ENCODE measurements at regions of chr17 and their contacts with region 1.

Region 1: GRCh38 chr17:76737082-76737675 is at the start of gene SRSF2:
- DNase-seq: peak; percentile 95 to 98
- H3K4me3 ChIP-seq: peak within 1 kb of the TSS; percentile 88 to 100 (median 98)
- H3K27ac ChIP-seq: peak within 1 kb of the TSS; percentile 100
- H3K4me1 ChIP-seq: peaks cover 3 to 12% (median 7%) of the 10 kb centered on the region in 4 experiments; a peak in 6 of 7 replicates
- H3K27me3 ChIP-seq: no peaks in the 10 kb centered on the region
- CTCF ChIP-seq: no peak
- EP300 ChIP-seq: peak in 1 of 2 experiments; percentile 85; a peak in 2 of 3 replicates
- POLR2A ChIP-seq: peak; percentile 100
- RAD21 ChIP-seq: no peak
- total RNA-seq, gene SRSF2: 397 and 413 TPM in 2 replicates

Region 2: DNA sequence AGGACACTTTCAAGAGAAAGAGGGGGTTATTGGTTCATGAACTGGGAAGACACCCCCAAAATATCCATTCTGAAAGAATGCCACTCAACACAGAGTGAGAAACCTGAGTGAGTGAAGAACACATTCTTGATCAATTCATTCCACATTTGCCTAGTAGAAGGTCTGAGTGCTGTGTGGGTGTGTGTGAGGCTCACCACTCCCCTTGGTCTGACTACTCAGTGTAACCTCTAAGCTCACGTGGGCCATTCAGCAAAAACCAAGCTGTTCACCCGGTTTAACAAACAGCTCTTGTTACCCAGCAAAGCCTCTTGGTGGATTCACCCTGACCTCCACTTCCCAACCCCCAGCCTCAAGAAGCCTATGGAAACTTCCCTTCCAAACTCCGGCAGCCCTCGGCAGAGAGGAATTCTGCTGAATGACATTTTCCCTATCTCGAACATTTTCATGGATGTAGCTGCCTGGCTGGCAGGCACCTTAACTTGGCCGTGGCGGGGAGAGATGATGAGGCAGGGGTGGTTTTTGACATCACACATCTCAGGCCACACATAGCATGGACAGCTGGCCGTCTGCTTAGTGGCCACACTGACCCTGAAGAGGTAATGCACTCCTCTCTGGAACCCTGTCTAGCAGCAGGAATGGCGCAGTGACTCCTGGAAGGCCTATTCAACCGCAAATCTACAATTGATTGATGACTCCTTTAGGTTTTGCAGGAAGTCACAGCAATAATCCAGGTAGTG is 105.2 kb before region 1 on chr17:
- CTCF ChIA-PET with region 1: no interaction called
- POLR2A ChIA-PET with region 1: no interaction called
- DNase-seq: no peak
- H3K4me3 ChIP-seq: no peak overlapping the region
- H3K27ac ChIP-seq: no peak overlapping the region
- H3K4me1 ChIP-seq: peaks cover 0 to 6% (median 1%) of the 10 kb centered on the region in 4 experiments; a peak in 4 of 7 replicates
- H3K27me3 ChIP-seq: no peaks in the 10 kb centered on the region
- CTCF ChIP-seq: no peak
- EP300 ChIP-seq: no peak
- POLR2A ChIP-seq: no peak
- RAD21 ChIP-seq: no peak

Region 3: DNA sequence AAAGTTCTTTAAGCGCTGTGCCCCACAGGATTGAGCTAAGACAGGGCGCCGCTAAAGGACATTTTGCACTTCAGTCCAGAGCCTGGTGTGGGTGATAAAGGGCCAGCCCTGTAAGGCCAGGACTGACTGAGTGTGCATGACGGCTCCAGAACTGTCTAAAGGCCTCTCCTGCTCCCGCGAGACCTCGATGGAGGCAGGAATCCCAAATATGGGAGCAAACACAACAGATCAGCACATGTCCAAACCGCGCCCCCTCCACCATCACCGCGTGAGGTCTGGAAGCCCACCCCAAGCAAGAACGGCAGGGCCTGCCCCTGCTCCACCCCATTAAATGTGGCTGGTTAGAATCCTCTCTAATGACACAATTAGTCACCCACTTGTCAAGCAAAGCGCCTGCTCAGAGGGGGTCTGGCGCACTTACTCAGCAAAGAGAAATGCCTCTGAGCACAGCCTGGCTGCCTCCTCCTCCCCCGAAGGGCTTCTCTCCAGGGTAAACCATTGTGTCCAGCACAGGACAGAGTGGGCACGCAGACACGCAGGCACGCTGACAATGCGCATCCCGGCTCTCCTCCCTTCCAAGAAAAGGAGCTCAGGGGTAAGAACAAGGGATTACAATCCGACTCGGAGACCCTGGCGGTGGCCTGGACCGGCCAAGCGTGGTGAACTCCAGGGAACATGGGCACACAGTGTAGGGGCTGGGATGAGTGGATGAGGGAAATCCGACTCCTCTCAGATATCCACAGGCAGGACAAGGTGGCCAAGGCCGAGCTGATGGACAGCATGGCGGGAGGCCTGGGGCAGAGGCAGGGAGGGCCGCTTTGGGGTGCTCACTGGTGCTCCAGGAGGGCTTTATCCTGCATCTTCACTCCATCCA is 27.9 kb before region 1 on chr17:
- CTCF ChIA-PET with region 1: interaction called, 6 read pairs
- POLR2A ChIA-PET with region 1: interaction called, 19 read pairs
- DNase-seq: peak in 1 of 2 experiments; percentile 56
- H3K4me3 ChIP-seq: peak overlapping the region; percentile 28 to 67 (median 54); a peak in 7 of 8 replicates
- H3K27ac ChIP-seq: no peak overlapping the region
- H3K4me1 ChIP-seq: peaks cover 11 to 28% (median 19%) of the 10 kb centered on the region in 4 experiments
- H3K27me3 ChIP-seq: peaks cover 2 to 22% (median 20%) of the 10 kb centered on the region in 4 experiments
- CTCF ChIP-seq: no peak
- EP300 ChIP-seq: no peak
- POLR2A ChIP-seq: no peak
- RAD21 ChIP-seq: no peak

Region 4: GRCh38 chr17:76714822-76715495 is 22.2 kb before region 1 on chr17:
- CTCF ChIA-PET with region 1: interaction called, 6 read pairs
- POLR2A ChIA-PET with region 1: interaction called, 19 read pairs
- DNase-seq: peak in 1 of 2 experiments; percentile 92
- H3K4me3 ChIP-seq: no peak overlapping the region
- H3K27ac ChIP-seq: no peak overlapping the region
- H3K4me1 ChIP-seq: peaks cover 2 to 7% (median 5%) of the 10 kb centered on the region in 4 experiments; a peak in 5 of 7 replicates
- H3K27me3 ChIP-seq: peaks cover 0 to 3% (median 2%) of the 10 kb centered on the region in 4 experiments; a peak in 5 of 7 replicates
- CTCF ChIP-seq: peak; percentile 53 to 80 (median 70)
- EP300 ChIP-seq: no peak
- POLR2A ChIP-seq: no peak
- RAD21 ChIP-seq: peak; percentile 55 to 69

Region 5: GRCh38 chr17:76726231-76726775 is 10.9 kb before region 1 on chr17 and contains the start of gene JMJD6:
- CTCF ChIA-PET with region 1: interaction called, 3 read pairs
- POLR2A ChIA-PET with region 1: interaction called, 181 read pairs
- DNase-seq: peak; percentile 87 to 90
- H3K4me3 ChIP-seq: peak within 1 kb of the TSS; percentile 83 to 99 (median 84)
- H3K27ac ChIP-seq: peak within 1 kb of the TSS; percentile 97
- H3K4me1 ChIP-seq: peaks cover 0 to 9% (median 2%) of the 10 kb centered on the region in 4 experiments; a peak in 5 of 7 replicates
- H3K27me3 ChIP-seq: no peaks in the 10 kb centered on the region; a peak in 2 of 7 replicates
- CTCF ChIP-seq: no peak
- EP300 ChIP-seq: no peak
- POLR2A ChIP-seq: peak in 1 of 2 experiments; percentile 43; a peak in 2 of 3 replicates
- RAD21 ChIP-seq: no peak
- total RNA-seq, gene JMJD6: 18.6 and 22.2 TPM in 2 replicates

Region 6: DNA sequence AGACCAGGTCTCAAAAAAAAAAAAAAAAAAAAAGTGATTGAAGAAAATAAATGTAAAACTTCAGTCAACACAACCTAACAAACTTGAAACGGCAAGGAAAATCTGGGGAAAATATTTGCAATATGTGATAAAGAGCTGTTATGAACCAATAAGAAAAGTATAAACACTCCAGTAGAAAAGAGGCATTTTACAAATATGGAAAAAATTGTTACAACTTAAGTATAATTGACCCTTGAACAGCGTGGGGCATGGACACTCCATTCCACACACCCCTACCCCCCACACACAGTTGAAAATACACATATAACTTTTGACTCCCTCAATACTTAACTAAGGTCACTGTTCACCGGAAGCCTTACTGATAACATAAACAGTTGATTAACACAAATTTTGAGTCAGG is 21.4 kb after region 1 on chr17:
- CTCF ChIA-PET with region 1: no interaction called
- POLR2A ChIA-PET with region 1: interaction called, 11 read pairs
- DNase-seq: no peak
- H3K4me3 ChIP-seq: no peak overlapping the region
- H3K27ac ChIP-seq: no peak overlapping the region
- H3K4me1 ChIP-seq: no peaks in the 10 kb centered on the region
- H3K27me3 ChIP-seq: no peaks in the 10 kb centered on the region
- CTCF ChIP-seq: no peak
- EP300 ChIP-seq: no peak
- POLR2A ChIP-seq: no peak
- RAD21 ChIP-seq: no peak

Region 7: GRCh38 chr17:76852843-76853242 is 115.7 kb after region 1 on chr17:
- CTCF ChIA-PET with region 1: no interaction called
- POLR2A ChIA-PET with region 1: no interaction called
- DNase-seq: no peak
- H3K4me3 ChIP-seq: no peak overlapping the region
- H3K27ac ChIP-seq: no peak overlapping the region
- H3K4me1 ChIP-seq: peaks cover 0 to 6% (median 0%) of the 10 kb centered on the region in 4 experiments; a peak in 1 of 7 replicates
- H3K27me3 ChIP-seq: no peaks in the 10 kb centered on the region
- CTCF ChIP-seq: no peak
- EP300 ChIP-seq: no peak
- POLR2A ChIP-seq: no peak
- RAD21 ChIP-seq: no peak

Region 8: GRCh38 chr17:76994237-76994637 is 257.1 kb after region 1 on chr17:
- CTCF ChIA-PET with region 1: no interaction called
- POLR2A ChIA-PET with region 1: no interaction called
- DNase-seq: no peak
- H3K4me3 ChIP-seq: no peak overlapping the region
- H3K27ac ChIP-seq: no peak overlapping the region
- H3K4me1 ChIP-seq: peaks cover 6 to 22% (median 15%) of the 10 kb centered on the region in 4 experiments
- H3K27me3 ChIP-seq: 0 out of 7 replicates have a peak, but pooled peaks cover 0 to 2% (median 0%) of the 10 kb centered on the region in 4 experiments
- CTCF ChIP-seq: no peak
- EP300 ChIP-seq: no peak
- POLR2A ChIP-seq: no peak
- RAD21 ChIP-seq: no peak